Endothelial cell of umbilical vein (primary cell): ENCODE measurements at regions of chr20 and their contacts with region 1.

Region 1: GRCh38 chr20:62887147-62887859 is 25.7 kb upstream of the TCFL5 start:
- DNase-seq: peak; percentile 23
- H3K4me3 ChIP-seq: no peak overlapping the region
- H3K27ac ChIP-seq: no peak overlapping the region
- H3K4me1 ChIP-seq: no peaks in the 10 kb centered on the region
- H3K27me3 ChIP-seq: no peaks in the 10 kb centered on the region
- CTCF ChIP-seq: no peak
- POLR2A ChIP-seq: no peak

Region 2: DNA sequence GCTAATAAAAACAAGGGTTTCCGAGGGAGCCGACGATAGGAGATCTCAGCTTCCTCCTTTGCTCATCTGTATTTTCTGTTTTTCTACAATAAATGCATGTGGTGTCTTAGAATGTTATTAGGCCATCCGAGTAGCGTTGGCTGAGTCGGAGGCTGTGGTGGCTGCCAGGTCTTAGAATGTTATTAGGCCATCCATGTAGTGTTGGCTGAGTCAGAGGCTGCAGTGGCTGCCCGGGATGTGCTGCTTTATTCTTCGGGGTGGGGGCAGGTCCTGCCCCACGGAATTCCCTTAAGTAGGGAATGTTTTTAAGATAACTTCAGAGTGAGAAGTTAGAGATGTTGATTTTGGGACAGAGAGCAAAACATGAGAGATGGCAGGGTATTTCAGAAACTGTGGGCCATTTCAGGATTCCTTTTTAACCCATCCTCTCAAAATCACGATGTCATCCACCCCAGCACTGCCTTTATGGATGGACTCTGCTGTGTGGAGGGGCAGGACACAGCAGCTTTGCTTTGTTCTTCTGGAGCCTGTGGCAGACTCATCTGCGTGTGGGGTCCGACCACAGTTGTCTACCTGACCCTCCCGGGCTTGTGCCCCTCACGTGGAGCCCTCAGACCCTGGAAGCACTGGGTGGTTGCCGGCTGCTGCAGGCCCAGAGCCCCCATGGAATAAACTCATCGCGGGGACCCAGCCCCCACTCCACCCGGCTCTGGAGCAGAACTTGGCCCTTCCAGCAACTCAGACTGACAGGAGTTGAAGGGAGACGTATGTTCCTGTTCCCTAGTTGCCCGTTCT is 628.6 kb before region 1 on chr20:
- CTCF ChIA-PET with region 1: no interaction called
- POLR2A ChIA-PET with region 1: no interaction called
- dilution Hi-C with region 1: no loop called
- intact Hi-C with region 1: no loop called
- DNase-seq: peak; percentile 28
- H3K4me3 ChIP-seq: no peak overlapping the region
- H3K27ac ChIP-seq: no peak overlapping the region
- H3K4me1 ChIP-seq: no peaks in the 10 kb centered on the region
- H3K27me3 ChIP-seq: no peaks in the 10 kb centered on the region
- CTCF ChIP-seq: no peak
- POLR2A ChIP-seq: no peak

Region 3: DNA sequence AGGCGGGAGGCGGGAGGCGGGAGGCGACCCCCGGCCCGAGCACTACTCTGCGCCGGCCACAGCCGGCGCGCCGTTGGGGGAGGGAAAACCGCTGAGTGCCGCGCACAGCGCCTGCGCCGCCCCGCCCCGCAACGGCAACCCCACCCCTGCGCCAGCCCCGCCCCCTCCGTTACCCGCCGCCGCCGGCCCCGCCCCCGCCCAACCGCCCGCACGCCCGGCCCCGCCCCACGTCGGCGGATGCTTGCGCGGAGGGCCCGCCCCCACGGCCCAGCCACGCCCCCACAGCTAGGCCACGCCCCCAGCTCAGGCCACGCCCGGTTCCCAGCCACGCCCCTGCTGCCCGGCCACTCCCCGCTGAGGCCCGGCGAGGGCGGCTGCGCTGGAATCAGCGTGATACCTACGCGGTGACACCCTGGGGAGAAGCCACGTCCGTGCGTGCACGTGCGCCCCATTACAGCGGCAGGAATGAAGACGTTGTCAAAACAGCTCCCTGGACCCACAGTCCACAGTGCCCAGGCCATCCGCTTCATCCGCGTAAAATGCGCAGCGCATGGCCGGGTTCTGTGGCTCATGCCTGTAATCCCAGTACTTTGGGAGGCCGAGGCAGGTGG is 25.5 kb before region 1 on chr20 and contains the start of gene TCFL5:
- CTCF ChIA-PET with region 1: no interaction called
- POLR2A ChIA-PET with region 1: no interaction called
- dilution Hi-C with region 1: no loop called
- intact Hi-C with region 1: no loop called
- DNase-seq: peak; percentile 86
- H3K4me3 ChIP-seq: peak within 1 kb of the TSS; percentile 51 to 64 (median 56)
- H3K27ac ChIP-seq: no peak within 1 kb of the TSS
- H3K4me1 ChIP-seq: peaks cover 10% of the 10 kb centered on the region
- H3K27me3 ChIP-seq: peaks cover 0 to 3% of the 10 kb centered on the region in 2 experiments
- CTCF ChIP-seq: no peak
- POLR2A ChIP-seq: no peak
- total RNA-seq, gene TCFL5: 9.4 and 11.1 TPM in 2 replicates

Region 4: GRCh38 chr20:62875419-62876361 is 11.6 kb before region 1 on chr20:
- CTCF ChIA-PET with region 1: interaction called, 30 read pairs
- POLR2A ChIA-PET with region 1: no interaction called
- dilution Hi-C with region 1: no loop called
- intact Hi-C with region 1: no loop called
- DNase-seq: peak; percentile 77
- H3K4me3 ChIP-seq: no peak overlapping the region
- H3K27ac ChIP-seq: no peak overlapping the region
- H3K4me1 ChIP-seq: peaks cover 9% of the 10 kb centered on the region
- H3K27me3 ChIP-seq: peaks cover 0 to 3% of the 10 kb centered on the region in 2 experiments
- CTCF ChIP-seq: peak; percentile 23 to 62
- POLR2A ChIP-seq: no peak

Region 5: GRCh38 chr20:63025534-63026331 is 138.4 kb after region 1 on chr20:
- CTCF ChIA-PET with region 1: no interaction called
- POLR2A ChIA-PET with region 1: no interaction called
- dilution Hi-C with region 1: no loop called
- intact Hi-C with region 1: no loop called
- DNase-seq: no peak
- H3K4me3 ChIP-seq: no peak overlapping the region
- H3K27ac ChIP-seq: no peak overlapping the region
- H3K4me1 ChIP-seq: no peaks in the 10 kb centered on the region
- H3K27me3 ChIP-seq: peaks cover 32 to 49% of the 10 kb centered on the region in 2 experiments
- CTCF ChIP-seq: no peak
- POLR2A ChIP-seq: no peak